HAP-1 (cell line): ENCODE measurements at regions of chr1 and their contacts with region 1.

Region 1: DNA sequence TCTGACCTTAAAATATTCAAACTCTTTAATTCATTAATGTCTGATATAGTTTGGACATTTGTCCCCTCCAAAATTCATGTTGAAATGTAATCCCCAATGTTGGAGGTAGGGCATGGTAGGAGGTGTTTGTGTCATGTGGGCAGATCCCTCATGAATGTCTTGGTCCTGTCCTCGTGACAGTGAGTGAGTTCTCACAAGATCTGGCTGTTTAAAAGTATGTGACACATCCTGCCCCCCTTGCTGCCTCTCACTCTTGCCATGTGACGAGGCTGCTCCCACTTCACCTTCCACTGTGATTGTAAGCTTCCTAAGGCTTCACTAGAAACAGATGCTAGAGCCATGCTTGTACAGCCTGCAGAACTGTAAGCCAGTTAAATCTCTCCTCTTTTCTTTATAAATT is 21.3 kb upstream of the FBXO28 start:
- DNase-seq: no peak
- H3K4me3 ChIP-seq: no peak overlapping the region
- H3K4me1 ChIP-seq: no peaks in the 10 kb centered on the region
- H3K27me3 ChIP-seq: no peaks in the 10 kb centered on the region

Region 2: GRCh38 chr1:222880586-222880985 is 1212.0 kb before region 1 on chr1:
- in situ Hi-C with region 1: no loop called
- DNase-seq: no peak
- H3K4me3 ChIP-seq: no peak overlapping the region
- H3K4me1 ChIP-seq: no peaks in the 10 kb centered on the region
- H3K27me3 ChIP-seq: no peaks in the 10 kb centered on the region

Region 3: DNA sequence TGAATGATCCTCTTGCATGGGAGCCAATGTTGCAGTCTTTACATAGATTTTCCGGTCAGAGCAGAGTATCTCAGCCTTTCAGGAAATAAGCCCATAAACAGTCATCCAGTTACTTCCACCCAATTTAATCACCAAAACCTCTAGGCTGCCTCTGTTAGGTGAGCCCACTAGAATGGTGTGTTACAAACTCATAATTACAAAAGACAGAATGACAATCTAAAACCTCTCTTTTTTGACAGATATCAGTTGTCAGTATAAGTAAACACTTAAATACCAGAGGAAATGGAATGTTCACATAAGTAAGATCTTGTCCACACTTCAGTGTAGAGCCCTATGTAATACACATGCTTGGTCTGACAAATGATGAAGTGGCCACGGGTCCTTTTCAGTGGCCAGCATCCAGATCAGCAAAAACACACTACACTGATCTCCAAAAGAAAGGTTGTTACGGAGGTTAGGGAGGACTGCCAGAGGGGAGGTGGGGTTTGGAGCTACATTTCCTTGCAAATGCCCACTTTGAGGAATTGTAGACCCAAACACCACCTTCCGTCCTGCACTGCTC is 50.0 kb before region 1 on chr1:
- in situ Hi-C with region 1: loop called (anchors 5 kb)
- DNase-seq: no peak
- H3K4me3 ChIP-seq: no peak overlapping the region
- H3K4me1 ChIP-seq: no peaks in the 10 kb centered on the region
- H3K27me3 ChIP-seq: peaks cover 5% of the 10 kb centered on the region; the same call in 1 of the 2 replicates

Region 4: GRCh38 chr1:224223819-224224714 is 131.5 kb after region 1 on chr1:
- in situ Hi-C with region 1: no loop called
- DNase-seq: no peak
- H3K4me3 ChIP-seq: no peak overlapping the region
- H3K4me1 ChIP-seq: no peaks in the 10 kb centered on the region
- H3K27me3 ChIP-seq: no peaks in the 10 kb centered on the region